Adrenal gland (tissue), 19 donors: ENCODE measurements at regions of chr9 and their contacts with region 1.

Region 1: GRCh38 chr9:131747356-131747755 is 7.5 kb upstream of the RAPGEF1 start:
- DNase-seq: peak in 4 of 7 donors; percentile 41 to 74 (median 52)
- H3K4me3 ChIP-seq: no peak overlapping the region
- H3K27ac ChIP-seq: no peak overlapping the region
- H3K4me1 ChIP-seq: no peaks in the 10 kb centered on the region
- H3K27me3 ChIP-seq: no peaks in the 10 kb centered on the region
- CTCF ChIP-seq: peak; percentile 35 to 70 (median 60)
- POLR2A ChIP-seq: no peak

Region 2: DNA sequence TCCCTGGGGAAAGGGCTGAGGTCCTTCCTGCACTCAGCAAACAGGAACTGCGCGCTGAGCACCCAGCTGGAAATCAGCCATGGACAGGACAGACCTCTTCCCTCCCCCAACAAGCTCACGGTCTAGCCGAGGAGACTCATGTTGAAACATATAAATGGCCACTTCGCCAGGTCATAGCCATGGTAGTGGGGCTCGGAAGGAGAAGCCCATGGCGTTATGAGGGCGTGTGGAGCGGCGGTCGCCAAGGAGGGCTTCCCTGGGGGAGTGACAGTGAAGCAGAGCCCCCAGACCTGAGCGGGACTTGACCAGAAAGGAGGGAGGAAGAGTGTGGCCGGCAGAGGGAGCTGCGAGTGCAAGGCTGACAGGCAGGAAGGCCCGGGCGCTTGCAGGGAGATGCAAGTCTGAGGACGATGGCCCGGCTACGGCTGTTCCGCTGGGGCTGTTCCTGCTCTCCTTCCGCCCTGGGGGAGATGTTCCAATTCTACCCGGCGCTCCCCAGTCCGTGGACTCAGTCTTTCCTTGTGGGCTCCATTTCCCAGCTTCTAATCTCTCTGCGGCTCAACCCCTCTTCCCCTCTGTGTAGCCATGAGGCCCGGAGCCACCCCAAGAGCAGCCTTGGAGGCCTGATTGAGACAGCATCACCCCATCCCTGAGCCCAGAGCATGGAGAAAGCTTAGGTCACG is 397.3 kb before region 1 on chr9:
- intact Hi-C with region 1: loop called in 1 of 2 experiments (anchors 5 kb)
- DNase-seq: peak; percentile 83 to 94 (median 93)
- H3K4me3 ChIP-seq: peak overlapping the region in 2 of 4 donors; percentile 28 to 40
- H3K27ac ChIP-seq: peak overlapping the region in 1 of 5 donors; percentile 42
- H3K4me1 ChIP-seq: peaks cover 0 to 10% of the 10 kb centered on the region in 2 donors
- H3K27me3 ChIP-seq: no peaks in the 10 kb centered on the region
- CTCF ChIP-seq: peak; percentile 79 to 96 (median 90)
- POLR2A ChIP-seq: no peak